GM12878 (cell line): ENCODE measurements at regions of chr17 and their contacts with region 1.

Region 1: DNA sequence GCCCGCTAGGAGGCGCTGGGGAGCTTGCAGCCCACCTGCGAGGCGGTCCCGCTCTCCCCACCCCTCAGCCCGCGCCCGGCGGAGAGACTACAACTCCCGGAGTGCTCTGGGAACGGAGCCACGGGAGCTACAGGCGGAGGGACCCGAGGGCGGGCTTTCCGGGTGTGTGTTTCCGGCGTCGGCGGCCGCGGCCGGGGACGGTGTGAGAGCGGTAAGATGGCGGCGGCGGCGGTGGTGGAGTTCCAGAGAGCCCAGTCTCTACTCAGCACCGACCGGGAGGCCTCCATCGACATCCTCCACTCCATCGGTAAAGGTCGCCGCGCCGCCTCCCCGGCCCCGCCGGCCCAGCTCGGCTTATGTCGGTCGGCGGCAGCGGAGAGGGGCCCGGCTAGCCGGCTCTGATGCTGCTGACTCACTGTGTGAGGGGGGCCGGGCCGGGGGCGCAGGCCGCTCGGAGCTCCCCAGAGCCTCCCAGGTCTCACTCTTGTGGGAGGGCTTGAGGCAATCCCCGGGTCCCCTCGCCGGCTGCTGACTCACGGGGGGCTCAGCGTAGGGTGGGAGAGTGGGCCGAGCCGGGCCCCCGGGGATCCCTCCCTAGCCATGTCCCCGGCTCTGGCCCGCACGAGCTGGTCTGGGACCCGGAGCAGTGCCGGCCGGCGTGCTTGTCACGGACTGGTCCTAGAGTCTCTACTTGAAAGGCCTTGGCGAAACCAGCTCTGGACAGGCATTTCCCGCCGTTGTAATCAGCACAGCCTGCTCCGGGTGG is at the start of gene PSMD11:
- DNase-seq: peak; percentile 78
- ATAC-seq: peak; percentile 97
- H3K4me3 ChIP-seq: peak within 1 kb of the TSS; percentile 97
- H3K27ac ChIP-seq: peak within 1 kb of the TSS; percentile 81
- H3K4me1 ChIP-seq: peaks cover 3% of the 10 kb centered on the region
- H3K27me3 ChIP-seq: no peaks in the 10 kb centered on the region
- CTCF ChIP-seq: peak; percentile 91 to 97 (median 92)
- EP300 ChIP-seq: no peak
- POLR2A ChIP-seq: peak; percentile 87
- RAD21 ChIP-seq: peak; percentile 49
- polyA plus RNA-seq, gene PSMD11: 283 to 291 TPM

Region 2: DNA sequence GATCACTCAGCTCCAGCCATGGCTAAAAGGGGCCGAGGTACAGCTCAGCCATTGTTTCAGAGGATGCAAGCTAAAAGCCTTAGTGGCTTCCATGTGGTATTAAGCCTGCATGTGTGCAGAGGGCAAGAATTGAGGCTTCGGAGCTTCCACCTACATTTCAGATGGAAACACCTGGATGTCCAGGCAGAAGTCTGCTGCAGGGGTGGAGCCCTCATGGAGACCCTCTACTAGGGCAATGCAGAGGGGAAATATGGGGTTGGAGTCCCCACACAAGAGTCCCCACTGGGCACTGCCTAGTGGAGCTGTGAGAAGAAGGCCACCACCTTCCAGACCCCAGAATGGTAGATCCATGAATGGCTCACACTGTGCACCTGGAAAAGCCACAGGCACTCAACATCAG is 14.9 kb before region 1 on chr17:
- CTCF ChIA-PET with region 1: interaction called, 11 read pairs
- POLR2A ChIA-PET with region 1: no interaction called
- RAD21 ChIA-PET with region 1: no interaction called
- SMC1A ChIA-PET with region 1: interaction called, 3 read pairs
- in situ Hi-C with region 1: no loop called
- intact Hi-C with region 1: no loop called
- DNase-seq: no peak
- ATAC-seq: no peak
- H3K4me3 ChIP-seq: no peak overlapping the region
- H3K27ac ChIP-seq: no peak overlapping the region
- H3K4me1 ChIP-seq: no peaks in the 10 kb centered on the region
- H3K27me3 ChIP-seq: no peaks in the 10 kb centered on the region
- CTCF ChIP-seq: no peak
- EP300 ChIP-seq: no peak
- POLR2A ChIP-seq: no peak
- RAD21 ChIP-seq: no peak